ENCODE measurements at regions of chr16 and their contacts with region 1.

Region 1: GRCh38 chr16:16073891-16074881 is 124.8 kb downstream of the ABCC1 start:
- DNase-seq: no peak
- H3K4me3 ChIP-seq: no peak overlapping the region
- H3K27ac ChIP-seq: peak overlapping the region; percentile 33 to 74
- H3K4me1 ChIP-seq: peaks cover 25 to 56% of the 10 kb centered on the region in 2 donors
- H3K27me3 ChIP-seq: no peaks in the 10 kb centered on the region
- CTCF ChIP-seq: no peak

Region 2: DNA sequence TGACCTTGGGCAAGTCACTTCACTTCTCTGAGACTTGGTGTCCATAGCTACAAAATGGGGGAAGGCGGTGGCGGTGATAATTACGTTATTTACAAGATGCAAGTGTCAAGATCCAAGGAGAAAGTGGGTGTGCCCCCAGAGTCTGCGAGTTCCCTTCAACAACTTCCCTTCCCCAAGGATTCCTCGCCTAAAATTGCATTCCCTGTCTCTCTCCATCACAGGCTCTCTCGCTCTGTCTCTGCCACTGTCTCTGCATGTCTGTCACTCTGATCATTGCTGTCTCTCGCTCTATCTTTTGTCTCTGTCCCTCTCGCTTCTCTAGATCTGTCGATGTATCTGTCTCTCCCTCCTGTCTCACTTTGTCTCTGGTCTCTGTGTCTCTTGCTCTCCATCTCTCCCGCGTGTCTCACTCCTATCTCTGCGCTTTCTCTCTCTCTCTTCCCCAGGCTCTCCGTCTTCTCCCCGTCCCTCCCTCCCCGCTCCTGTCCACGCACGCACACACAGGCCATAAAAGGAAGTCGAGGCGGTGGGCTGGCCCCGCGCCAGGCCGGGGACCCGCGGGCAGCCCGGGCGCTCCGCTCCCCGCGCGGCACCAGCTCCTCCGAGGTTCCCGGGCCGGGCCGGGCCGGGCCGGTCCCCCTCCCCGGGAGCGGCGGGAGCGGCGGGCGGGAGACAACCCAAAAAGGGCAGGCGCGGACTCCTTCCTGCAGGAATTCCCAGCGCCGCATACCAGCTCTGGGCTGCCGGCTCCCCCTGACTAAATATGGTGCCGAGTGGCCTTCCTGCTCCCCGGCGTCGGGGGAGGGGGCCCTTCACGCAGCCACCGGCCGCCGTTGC is 216.2 kb before region 1 on chr16:
- intact Hi-C with region 1: loop called (anchors 1 kb)
- DNase-seq: peak; percentile 25 to 86
- H3K4me3 ChIP-seq: peak overlapping the region; percentile 71 to 92
- H3K27ac ChIP-seq: peak overlapping the region; percentile 88 to 92
- H3K4me1 ChIP-seq: peaks cover 0 to 3% of the 10 kb centered on the region in 2 donors
- H3K27me3 ChIP-seq: no peaks in the 10 kb centered on the region
- CTCF ChIP-seq: peak in 1 of 3 experiments; percentile 1

Region 3: DNA sequence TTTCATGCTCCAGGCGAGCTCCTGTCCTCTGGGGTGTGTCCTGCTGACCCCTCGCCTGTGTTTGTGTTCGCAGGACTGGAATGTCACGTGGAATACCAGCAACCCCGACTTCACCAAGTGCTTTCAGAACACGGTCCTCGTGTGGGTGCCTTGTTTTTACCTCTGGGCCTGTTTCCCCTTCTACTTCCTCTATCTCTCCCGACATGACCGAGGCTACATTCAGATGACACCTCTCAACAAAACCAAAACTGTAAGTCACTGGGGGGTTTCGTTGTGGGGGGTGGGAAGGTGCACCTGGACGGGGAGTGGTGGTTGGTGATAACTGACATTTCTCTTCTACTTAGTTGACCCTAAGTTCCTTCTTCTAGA is 66.5 kb before region 1 on chr16:
- intact Hi-C with region 1: no loop called
- DNase-seq: no peak
- H3K4me3 ChIP-seq: no peak overlapping the region
- H3K27ac ChIP-seq: peak overlapping the region in 1 of 2 donors; percentile 35
- H3K4me1 ChIP-seq: peaks cover 0 to 24% of the 10 kb centered on the region in 2 donors
- H3K27me3 ChIP-seq: no peaks in the 10 kb centered on the region
- CTCF ChIP-seq: no peak

Region 4: GRCh38 chr16:16086653-16087446 is 12.7 kb after region 1 on chr16:
- intact Hi-C with region 1: loop called (anchors 1 kb)
- DNase-seq: no peak
- H3K4me3 ChIP-seq: no peak overlapping the region
- H3K27ac ChIP-seq: peak overlapping the region; percentile 81 to 83
- H3K4me1 ChIP-seq: peaks cover 9 to 38% of the 10 kb centered on the region in 2 donors
- H3K27me3 ChIP-seq: no peaks in the 10 kb centered on the region
- CTCF ChIP-seq: no peak